ENCODE measurements at regions of chr1 and their contacts with region 1.

Region 1: DNA sequence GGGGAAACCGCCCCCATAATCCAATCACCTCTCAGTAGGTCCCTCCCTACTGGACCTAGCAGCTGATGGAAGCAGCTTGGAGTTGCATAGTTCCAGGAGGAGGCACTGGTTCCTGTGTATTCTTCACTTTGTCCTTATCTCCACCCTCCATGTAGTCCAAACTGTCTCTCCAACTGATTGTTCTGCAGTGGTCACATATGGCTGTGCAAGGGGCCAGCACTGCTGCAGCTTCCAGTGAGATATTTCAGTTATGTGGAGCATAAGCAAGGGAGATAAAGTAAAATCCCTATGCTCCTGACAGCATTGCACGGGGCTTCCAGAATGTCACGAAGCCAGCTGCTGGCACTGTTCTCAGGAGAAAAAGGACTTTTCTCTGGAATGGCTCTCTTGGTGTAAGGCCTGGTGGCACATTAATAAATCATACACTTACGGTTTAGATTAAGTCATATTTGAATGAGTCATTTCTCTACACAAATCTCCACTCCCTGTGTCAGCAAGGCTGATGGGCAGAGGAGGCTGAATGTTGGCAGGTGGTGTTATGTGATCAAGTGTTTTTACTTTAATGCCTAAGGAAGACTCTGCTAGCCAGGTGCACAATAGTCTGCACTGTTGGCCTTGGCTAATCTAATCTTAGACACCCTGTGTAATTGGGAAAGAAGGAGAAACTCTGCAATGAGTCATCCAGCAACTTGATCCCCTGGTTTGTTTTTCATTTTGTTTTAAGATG is 93.4 kb downstream of the KCNK1 start:
- DNase-seq: peak; percentile 81 to 99
- H3K4me3 ChIP-seq: peak overlapping the region; percentile 26; the same call in 1 of the 2 replicates
- H3K27ac ChIP-seq: peak overlapping the region; percentile 84
- H3K4me1 ChIP-seq: peaks cover 67% of the 10 kb centered on the region
- H3K27me3 ChIP-seq: no peaks in the 10 kb centered on the region
- CTCF ChIP-seq: no peak

Region 2: GRCh38 chr1:232927830-232928505 is 779.3 kb before region 1 on chr1:
- CTCF ChIA-PET with region 1: no interaction called
- POLR2A ChIA-PET with region 1: no interaction called
- intact Hi-C with region 1: no loop called
- DNase-seq: no peak
- H3K4me3 ChIP-seq: no peak overlapping the region
- H3K27ac ChIP-seq: no peak overlapping the region
- H3K4me1 ChIP-seq: no peaks in the 10 kb centered on the region
- H3K27me3 ChIP-seq: no peaks in the 10 kb centered on the region; the same call in 1 of the 2 replicates
- CTCF ChIP-seq: no peak

Region 3: DNA sequence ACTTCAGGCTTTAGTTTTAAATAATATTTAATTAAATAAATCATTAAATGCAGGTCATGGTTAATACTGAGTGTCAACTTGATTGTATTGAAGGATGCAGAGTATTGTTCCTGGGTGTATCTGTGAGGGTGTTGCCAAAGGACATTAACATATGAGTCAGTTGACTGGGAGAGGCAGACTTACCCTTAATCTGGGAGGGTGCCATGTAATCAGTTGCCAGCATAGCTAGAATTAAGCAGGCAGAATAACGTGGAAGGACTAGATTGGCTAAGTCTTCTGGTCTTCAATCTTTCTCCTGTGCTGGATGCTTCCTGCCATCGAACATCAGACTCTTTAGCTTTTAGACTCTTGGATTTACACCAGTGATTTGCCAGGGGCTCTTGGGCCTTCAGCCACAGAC is 294.5 kb before region 1 on chr1:
- CTCF ChIA-PET with region 1: no interaction called
- POLR2A ChIA-PET with region 1: no interaction called
- intact Hi-C with region 1: no loop called
- DNase-seq: no peak
- H3K4me3 ChIP-seq: no peak overlapping the region
- H3K27ac ChIP-seq: no peak overlapping the region
- H3K4me1 ChIP-seq: no peaks in the 10 kb centered on the region
- H3K27me3 ChIP-seq: no peaks in the 10 kb centered on the region
- CTCF ChIP-seq: no peak

Region 4: DNA sequence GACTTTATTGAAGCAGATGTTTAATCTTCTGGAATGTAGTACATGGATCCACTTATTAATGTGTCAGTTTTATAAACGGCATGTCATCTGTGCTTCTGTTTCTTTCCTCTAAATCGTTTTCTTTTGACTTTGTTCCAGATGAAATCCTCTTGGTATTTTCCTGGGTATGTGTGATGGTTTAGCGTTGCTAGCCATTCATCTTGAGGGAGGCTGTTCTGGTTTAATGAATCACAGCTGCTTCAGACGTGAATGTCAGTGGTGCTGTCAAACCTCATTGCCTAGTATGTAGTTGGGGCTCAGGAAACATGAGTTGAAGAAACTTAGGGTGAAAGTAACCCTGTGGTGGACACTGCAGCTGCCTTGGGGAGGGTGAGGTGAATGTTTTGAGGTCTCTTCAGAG is 60.2 kb before region 1 on chr1:
- CTCF ChIA-PET with region 1: no interaction called
- POLR2A ChIA-PET with region 1: interaction called, 15 read pairs
- intact Hi-C with region 1: no loop called
- DNase-seq: no peak
- H3K4me3 ChIP-seq: no peak overlapping the region
- H3K27ac ChIP-seq: no peak overlapping the region
- H3K4me1 ChIP-seq: peaks cover 22% of the 10 kb centered on the region
- H3K27me3 ChIP-seq: no peaks in the 10 kb centered on the region
- CTCF ChIP-seq: no peak

Region 5: DNA sequence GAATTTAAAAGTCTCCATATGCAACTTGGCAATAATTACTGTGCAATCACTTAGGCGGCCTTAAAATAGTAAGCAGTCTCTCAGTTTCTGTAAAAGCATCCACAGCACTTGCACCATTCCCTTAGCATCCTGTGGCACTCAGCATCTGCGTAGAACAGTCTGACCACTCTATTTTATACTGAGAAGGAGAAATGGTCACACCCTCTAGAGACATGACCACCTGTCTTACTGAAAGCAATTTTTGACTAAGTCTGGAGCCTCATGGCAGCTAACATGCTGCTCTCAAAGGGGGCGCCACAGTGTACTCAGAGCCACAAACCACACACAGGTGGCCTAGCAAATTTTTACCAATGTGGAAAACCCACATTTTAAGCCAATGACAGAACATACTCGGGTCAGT is 31.4 kb before region 1 on chr1:
- CTCF ChIA-PET with region 1: no interaction called
- POLR2A ChIA-PET with region 1: no interaction called
- intact Hi-C with region 1: loop called (anchors 1 kb)
- DNase-seq: no peak
- H3K4me3 ChIP-seq: no peak overlapping the region
- H3K27ac ChIP-seq: no peak overlapping the region
- H3K4me1 ChIP-seq: peaks cover 17% of the 10 kb centered on the region; the same call in 1 of the 2 replicates
- H3K27me3 ChIP-seq: no peaks in the 10 kb centered on the region
- CTCF ChIP-seq: no peak

Region 6: GRCh38 chr1:233689017-233689747 is 18.1 kb before region 1 on chr1:
- CTCF ChIA-PET with region 1: no interaction called
- POLR2A ChIA-PET with region 1: no interaction called
- intact Hi-C with region 1: loop called (anchors 2 kb)
- DNase-seq: peak; percentile 37 to 51
- H3K4me3 ChIP-seq: no peak overlapping the region
- H3K27ac ChIP-seq: peak overlapping the region; percentile 80
- H3K4me1 ChIP-seq: peaks cover 35% of the 10 kb centered on the region
- H3K27me3 ChIP-seq: no peaks in the 10 kb centered on the region
- CTCF ChIP-seq: no peak

Region 7: GRCh38 chr1:233897325-233898162 is 190.2 kb after region 1 on chr1:
- CTCF ChIA-PET with region 1: no interaction called
- POLR2A ChIA-PET with region 1: no interaction called
- intact Hi-C with region 1: no loop called
- DNase-seq: no peak
- H3K4me3 ChIP-seq: no peak overlapping the region
- H3K27ac ChIP-seq: no peak overlapping the region
- H3K4me1 ChIP-seq: no peaks in the 10 kb centered on the region
- H3K27me3 ChIP-seq: no peaks in the 10 kb centered on the region
- CTCF ChIP-seq: no peak